ENCODE measurements at regions of chrX and their contacts with region 1.

Region 1: GRCh38 chrX:40468033-40468846 is 112.5 kb upstream of the ATP6AP2 start:
- DNase-seq: no peak

Region 2: GRCh38 chrX:40108959-40109287 is 359.3 kb before region 1 on chrX:
- intact Hi-C with region 1: no loop called
- DNase-seq: peak; percentile 88

Region 3: GRCh38 chrX:40224658-40225057 is 243.6 kb before region 1 on chrX:
- intact Hi-C with region 1: no loop called
- DNase-seq: no peak

Region 4: DNA sequence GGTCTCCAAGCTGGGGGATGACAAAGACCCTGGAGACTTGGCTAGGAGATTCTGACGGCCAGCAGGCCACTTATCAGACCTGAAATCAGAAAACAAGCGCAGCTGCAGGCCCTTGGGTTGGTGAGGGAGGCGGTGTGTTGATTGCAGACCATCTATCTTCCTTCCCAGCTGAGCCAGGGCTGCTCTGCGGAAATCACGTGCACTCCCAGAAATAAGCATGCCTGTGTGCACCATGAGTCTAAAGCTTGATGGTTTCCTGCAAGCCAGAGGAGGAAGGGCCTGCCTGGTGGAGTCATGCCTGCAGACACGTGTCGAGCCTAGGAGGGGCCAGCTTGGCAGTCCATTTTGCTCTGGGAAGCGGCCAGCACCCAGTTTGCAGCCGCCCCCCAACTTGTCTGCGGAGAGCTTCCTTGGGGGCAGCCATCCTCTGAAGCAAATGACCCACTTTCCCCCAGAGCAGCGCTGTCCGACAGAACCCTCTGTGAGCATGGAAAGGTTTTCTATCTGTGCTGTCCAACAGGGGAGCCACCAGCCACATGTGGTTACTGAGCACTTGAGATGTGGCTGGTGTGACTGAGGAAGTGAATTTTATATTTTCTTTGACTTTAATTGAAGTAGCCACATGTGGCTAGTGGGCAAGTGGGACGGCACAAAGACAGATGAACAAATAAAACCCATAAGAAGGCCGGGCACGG is 194.7 kb before region 1 on chrX:
- intact Hi-C with region 1: loop called (anchors 10 kb)
- DNase-seq: no peak